ENCODE measurements at regions of chr21 and their contacts with region 1.

Region 1: DNA sequence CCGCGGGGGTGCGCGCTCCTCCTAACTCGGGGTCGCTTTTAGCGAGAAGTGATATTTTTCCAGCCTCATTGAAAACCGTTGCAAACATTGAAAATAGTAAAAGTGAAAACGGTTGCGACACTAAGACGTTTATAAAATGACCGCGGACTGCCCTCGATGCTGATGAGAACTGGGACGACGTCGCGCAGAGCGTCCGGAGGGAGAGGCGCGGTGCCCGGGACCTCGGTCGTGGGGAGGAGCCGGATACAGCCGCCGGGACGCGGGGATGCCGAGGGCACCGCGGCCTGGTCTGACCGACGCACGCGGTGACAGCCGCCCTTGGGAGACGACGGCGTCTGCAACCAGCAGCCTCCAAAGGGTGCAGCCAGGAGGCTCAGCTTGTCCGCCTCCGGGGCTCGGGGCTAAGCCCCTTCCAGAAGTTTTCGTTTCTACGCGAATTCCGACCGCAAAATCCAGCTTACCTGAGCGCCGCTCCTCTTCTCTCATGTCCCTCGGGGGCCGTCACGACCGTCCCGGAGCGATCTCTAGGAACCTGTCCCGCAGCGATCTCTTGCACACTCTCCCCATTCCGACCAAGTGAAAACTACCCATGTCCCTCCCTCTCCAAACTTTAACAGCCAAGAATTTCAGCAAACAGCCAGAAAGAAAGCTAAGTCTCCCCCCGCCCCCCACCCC is 144.4 kb upstream of the ETS2 start:
- DNase-seq: peak in 1 of 2 donors; percentile 81
- H3K4me3 ChIP-seq: peak overlapping the region; percentile 64 to 82
- H3K27ac ChIP-seq: peak overlapping the region; percentile 92 to 96
- H3K4me1 ChIP-seq: peaks cover 0 to 5% of the 10 kb centered on the region in 2 donors
- H3K27me3 ChIP-seq: no peaks in the 10 kb centered on the region
- CTCF ChIP-seq: no peak

Region 2: GRCh38 chr21:38386967-38387366 is 274.4 kb before region 1 on chr21:
- intact Hi-C with region 1: loop called (anchors 5 kb)
- DNase-seq: no peak
- H3K4me3 ChIP-seq: no peak overlapping the region
- H3K27ac ChIP-seq: no peak overlapping the region
- H3K4me1 ChIP-seq: peaks cover 4 to 27% of the 10 kb centered on the region in 2 donors
- H3K27me3 ChIP-seq: no peaks in the 10 kb centered on the region
- CTCF ChIP-seq: no peak

Region 3: GRCh38 chr21:38505654-38506515 is 155.4 kb before region 1 on chr21:
- intact Hi-C with region 1: loop called (anchors 2 kb)
- DNase-seq: no peak
- H3K4me3 ChIP-seq: peak overlapping the region; percentile 31 to 62
- H3K27ac ChIP-seq: peak overlapping the region; percentile 82 to 86
- H3K4me1 ChIP-seq: peaks cover 0 to 24% of the 10 kb centered on the region in 2 donors
- H3K27me3 ChIP-seq: no peaks in the 10 kb centered on the region
- CTCF ChIP-seq: peak; percentile 54 to 75 (median 73)

Measured in ascending aorta (tissue), 2 donors.